WTC11 (cell line): ENCODE measurements at regions of chr11 and their contacts with region 1.

Region 1: DNA sequence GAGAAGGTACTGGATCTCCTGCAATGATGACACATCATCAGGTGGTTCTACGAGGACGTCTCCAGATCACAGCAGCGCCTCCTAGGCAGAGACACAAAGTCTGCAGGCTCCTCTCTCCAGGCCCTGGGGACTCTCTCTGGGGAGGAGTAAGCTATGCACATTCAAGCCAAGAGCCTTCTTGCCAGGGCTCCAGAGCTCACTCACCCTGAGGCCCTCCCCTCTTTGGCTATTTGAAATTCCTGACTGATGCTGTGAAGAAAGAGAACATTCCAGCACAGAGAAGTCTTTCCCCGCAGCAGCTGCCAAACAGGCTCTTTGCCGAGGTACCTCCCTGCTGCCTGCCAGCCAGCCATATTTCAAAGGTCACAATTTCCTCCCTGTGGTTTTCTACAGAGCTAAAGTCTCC is 204.9 kb downstream of the CSNK2A3 start:
- DNase-seq: peak; percentile 66
- ATAC-seq: peak; percentile 99
- H3K4me3 Mint-ChIP-seq: no peak overlapping the region
- H3K27ac Mint-ChIP-seq: peak overlapping the region; percentile 68; the same call in 1 of the 2 replicates
- H3K4me1 Mint-ChIP-seq: peaks cover 15% of the 10 kb centered on the region
- H3K27me3 Mint-ChIP-seq: peaks cover 3% of the 10 kb centered on the region
- CTCF ChIP-seq: no peak

Region 2: DNA sequence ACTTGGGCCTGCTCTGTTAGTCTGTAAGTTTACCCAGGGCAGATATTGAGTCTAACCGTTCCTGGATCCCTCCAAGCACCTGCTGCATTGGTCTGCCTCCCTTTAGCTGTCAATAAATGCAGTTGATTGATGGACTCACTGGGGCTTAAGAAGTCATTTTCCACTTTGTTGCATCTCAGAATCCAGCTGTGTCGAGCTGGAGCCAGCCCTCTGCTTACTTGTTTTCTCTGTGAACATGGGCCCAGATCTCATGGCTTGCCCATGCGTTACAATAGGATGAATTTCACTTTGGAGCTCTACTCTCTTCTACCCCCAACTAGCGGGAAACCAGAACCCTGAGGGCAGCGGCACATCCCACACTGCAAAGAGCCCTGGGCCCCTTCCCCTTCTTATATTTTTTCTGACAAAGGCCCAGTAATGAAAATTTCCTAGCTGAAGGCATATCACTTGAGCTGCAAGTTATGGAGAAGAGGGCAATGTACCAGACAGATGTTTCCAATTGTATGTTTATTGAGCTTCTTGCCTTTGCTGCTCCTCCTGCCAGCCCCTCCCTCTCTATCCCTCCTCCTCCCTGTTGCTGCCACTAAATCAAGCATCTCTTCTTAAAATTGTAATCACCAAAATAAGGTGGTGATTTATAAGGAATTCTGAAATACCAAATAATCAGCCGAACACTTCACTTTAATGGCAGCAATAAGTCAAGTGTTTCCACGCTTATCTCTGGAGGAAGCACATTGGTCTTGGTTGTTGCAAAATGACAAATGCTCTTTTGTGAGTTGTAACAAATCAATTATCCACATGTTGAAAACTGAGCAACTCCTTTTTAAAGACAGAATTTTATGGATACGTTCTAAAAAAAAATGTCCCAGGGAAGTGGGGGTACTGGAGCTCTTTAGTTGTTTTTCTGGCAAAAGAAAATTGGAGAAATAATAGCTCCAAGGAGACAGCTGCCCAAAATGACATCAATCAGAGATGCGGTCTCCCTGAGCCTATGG is 78.0 kb before region 1 on chr11:
- CTCF ChIA-PET with region 1: interaction called, 10 read pairs
- POLR2A ChIA-PET with region 1: no interaction called
- DNase-seq: no peak
- ATAC-seq: no peak
- H3K4me3 Mint-ChIP-seq: no peak overlapping the region
- H3K27ac Mint-ChIP-seq: no peak overlapping the region
- H3K4me1 Mint-ChIP-seq: peaks cover 79% of the 10 kb centered on the region
- H3K27me3 Mint-ChIP-seq: peaks cover 4% of the 10 kb centered on the region
- CTCF ChIP-seq: no peak

Region 3: DNA sequence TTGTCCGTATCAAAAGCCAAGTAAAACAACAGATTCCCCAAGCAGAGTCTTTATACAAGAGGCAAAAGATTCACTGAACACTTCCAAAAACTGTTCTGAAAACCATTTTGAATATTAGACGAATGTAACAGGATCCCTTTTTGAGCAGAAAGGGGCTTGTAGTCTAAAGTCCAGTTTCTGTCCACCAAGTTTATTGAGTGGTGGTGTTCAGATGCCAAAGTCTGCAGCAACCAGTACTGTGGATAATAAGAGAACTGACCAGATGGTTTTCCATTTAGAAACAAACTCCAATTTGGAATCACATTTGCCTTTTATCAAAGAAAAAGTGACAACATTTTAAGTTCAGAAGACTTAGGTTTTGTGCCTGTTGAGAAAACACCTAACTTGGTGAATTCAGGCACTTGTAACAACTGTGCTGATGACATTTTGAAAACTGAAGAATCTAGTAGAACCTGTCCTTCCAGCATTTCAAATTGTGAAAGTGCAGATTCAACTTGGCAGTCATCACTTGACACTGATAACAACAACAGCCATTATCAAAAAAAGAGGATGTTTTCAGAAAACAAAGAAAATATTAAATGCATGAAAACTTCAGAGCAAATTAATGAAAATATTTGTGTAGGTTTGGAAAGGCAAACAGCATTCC is 12.2 kb before region 1 on chr11:
- CTCF ChIA-PET with region 1: interaction called, 10 read pairs
- POLR2A ChIA-PET with region 1: no interaction called
- DNase-seq: no peak
- ATAC-seq: no peak
- H3K4me3 Mint-ChIP-seq: no peak overlapping the region
- H3K27ac Mint-ChIP-seq: no peak overlapping the region; the same call in 1 of the 2 replicates
- H3K4me1 Mint-ChIP-seq: peaks cover 13% of the 10 kb centered on the region
- H3K27me3 Mint-ChIP-seq: no peaks in the 10 kb centered on the region
- CTCF ChIP-seq: no peak

Region 4: GRCh38 chr11:11297578-11297977 is 149.5 kb after region 1 on chr11:
- CTCF ChIA-PET with region 1: no interaction called
- POLR2A ChIA-PET with region 1: no interaction called
- DNase-seq: no peak
- ATAC-seq: no peak
- H3K4me3 Mint-ChIP-seq: no peak overlapping the region
- H3K27ac Mint-ChIP-seq: no peak overlapping the region
- H3K4me1 Mint-ChIP-seq: no peaks in the 10 kb centered on the region
- H3K27me3 Mint-ChIP-seq: no peaks in the 10 kb centered on the region
- CTCF ChIP-seq: no peak